Mammary epithelial cell (primary cell): ENCODE measurements at regions of chr4 and their contacts with region 1.

Region 1: GRCh38 chr4:102620697-102621497 is 119.7 kb downstream of the NFKB1 start:
- DNase-seq: peak; percentile 71
- H3K4me3 ChIP-seq: peak overlapping the region; percentile 8 to 31 (median 18)
- H3K27ac ChIP-seq: peak overlapping the region; percentile 50
- H3K4me1 ChIP-seq: peaks cover 19% of the 10 kb centered on the region
- H3K27me3 ChIP-seq: no peaks in the 10 kb centered on the region
- CTCF ChIP-seq: peak; percentile 31 to 63

Region 2: GRCh38 chr4:102430461-102430910 is 190.4 kb before region 1 on chr4:
- CTCF ChIA-PET with region 1: interaction called, 4 read pairs
- dilution Hi-C with region 1: no loop called
- in situ Hi-C with region 1: no loop called
- intact Hi-C with region 1: loop called (anchors 5 kb)
- DNase-seq: peak; percentile 36
- H3K4me3 ChIP-seq: peak overlapping the region; percentile 44 to 99 (median 75)
- H3K27ac ChIP-seq: peak overlapping the region; percentile 98
- H3K4me1 ChIP-seq: peaks cover 12% of the 10 kb centered on the region
- H3K27me3 ChIP-seq: no peaks in the 10 kb centered on the region
- CTCF ChIP-seq: no peak

Region 3: GRCh38 chr4:102684610-102685052 is 63.7 kb after region 1 on chr4:
- CTCF ChIA-PET with region 1: no interaction called
- dilution Hi-C with region 1: no loop called
- in situ Hi-C with region 1: no loop called
- intact Hi-C with region 1: loop called (anchors 2 kb)
- DNase-seq: peak; percentile 97
- H3K4me3 ChIP-seq: no peak overlapping the region
- H3K27ac ChIP-seq: peak overlapping the region; percentile 95
- H3K4me1 ChIP-seq: peaks cover 44% of the 10 kb centered on the region
- H3K27me3 ChIP-seq: no peaks in the 10 kb centered on the region
- CTCF ChIP-seq: no peak

Region 4: GRCh38 chr4:102789317-102789717 is 168.4 kb after region 1 on chr4:
- CTCF ChIA-PET with region 1: interaction called, 5 read pairs
- dilution Hi-C with region 1: no loop called
- in situ Hi-C with region 1: no loop called
- intact Hi-C with region 1: loop called (anchors 2 kb)
- DNase-seq: peak; percentile 64
- H3K4me3 ChIP-seq: no peak overlapping the region
- H3K27ac ChIP-seq: peak overlapping the region; percentile 33
- H3K4me1 ChIP-seq: no peaks in the 10 kb centered on the region
- H3K27me3 ChIP-seq: no peaks in the 10 kb centered on the region
- CTCF ChIP-seq: no peak

Region 5: DNA sequence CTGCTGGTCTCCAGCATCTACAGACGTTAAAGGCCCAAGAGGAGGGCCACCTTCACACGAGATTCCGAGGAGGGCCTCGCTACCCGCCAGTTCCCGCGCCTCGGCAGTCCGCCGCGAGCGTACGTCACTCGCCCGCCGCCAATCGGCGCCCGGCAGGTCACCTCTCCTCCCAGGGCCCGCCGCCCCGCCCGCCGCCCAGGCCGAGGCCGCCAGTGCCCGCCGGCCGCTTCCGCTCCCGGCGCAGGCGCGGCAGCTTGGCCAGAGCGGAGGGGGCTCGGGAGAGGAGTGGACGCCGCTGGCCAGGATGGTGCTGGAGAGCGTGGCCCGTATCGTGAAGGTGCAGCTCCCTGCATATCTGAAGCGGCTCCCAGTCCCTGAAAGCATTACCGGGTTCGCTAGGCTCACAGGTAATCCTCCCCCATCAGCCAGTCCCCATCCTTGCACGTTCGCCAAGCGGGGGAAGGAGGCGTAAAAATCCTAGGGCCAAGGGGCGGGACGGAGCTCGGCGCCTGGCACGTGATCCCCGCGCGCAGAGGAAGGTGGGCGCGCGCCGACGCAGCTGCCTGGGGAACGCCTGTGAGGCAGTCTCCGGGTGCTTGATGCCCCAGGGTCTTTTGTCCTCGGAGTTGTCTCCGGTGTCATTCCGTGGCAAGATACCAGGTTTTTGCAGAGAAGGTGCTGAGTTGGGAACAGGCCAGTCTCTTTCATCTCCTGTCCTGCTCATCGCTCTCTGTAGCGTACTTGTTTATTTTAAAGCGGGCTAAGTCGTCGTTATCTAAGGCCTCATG is 248.1 kb after region 1 on chr4 and contains the start of gene CISD2:
- CTCF ChIA-PET with region 1: no interaction called
- dilution Hi-C with region 1: no loop called
- in situ Hi-C with region 1: no loop called
- intact Hi-C with region 1: loop called (anchors 2 kb)
- DNase-seq: peak; percentile 92
- H3K4me3 ChIP-seq: peak within 1 kb of the TSS; percentile 71 to 83 (median 74)
- H3K27ac ChIP-seq: peak within 1 kb of the TSS; percentile 94
- H3K4me1 ChIP-seq: peaks cover 15% of the 10 kb centered on the region
- H3K27me3 ChIP-seq: no peaks in the 10 kb centered on the region
- CTCF ChIP-seq: no peak
- total RNA-seq, gene CISD2: 23.0 to 26.8 TPM

Region 6: GRCh38 chr4:103091601-103092223 is 470.8 kb after region 1 on chr4:
- CTCF ChIA-PET with region 1: interaction called, 11 read pairs
- dilution Hi-C with region 1: no loop called
- in situ Hi-C with region 1: loop called (anchors 10 kb)
- intact Hi-C with region 1: loop called (anchors 1 kb)
- DNase-seq: peak; percentile 63
- H3K4me3 ChIP-seq: no peak overlapping the region
- H3K27ac ChIP-seq: no peak overlapping the region
- H3K4me1 ChIP-seq: peaks cover 4% of the 10 kb centered on the region
- H3K27me3 ChIP-seq: no peaks in the 10 kb centered on the region
- CTCF ChIP-seq: peak; percentile 52 to 66